Adrenal gland (tissue), 19 donors: ENCODE measurements at regions of chr5 and their contacts with region 1.

Region 1: GRCh38 chr5:36739751-36740221 is 133.4 kb downstream of the SLC1A3 start:
- DNase-seq: peak; percentile 61 to 91 (median 73)
- H3K4me3 ChIP-seq: no peak overlapping the region
- H3K27ac ChIP-seq: no peak overlapping the region
- H3K4me1 ChIP-seq: peaks cover 8 to 12% of the 10 kb centered on the region in 2 donors
- H3K27me3 ChIP-seq: no peaks in the 10 kb centered on the region
- CTCF ChIP-seq: peak; percentile 64 to 84 (median 80)
- POLR2A ChIP-seq: no peak

Region 2: GRCh38 chr5:36414869-36415282 is 324.9 kb before region 1 on chr5:
- intact Hi-C with region 1: no loop called
- DNase-seq: no peak
- H3K4me3 ChIP-seq: no peak overlapping the region
- H3K27ac ChIP-seq: no peak overlapping the region
- H3K4me1 ChIP-seq: no peaks in the 10 kb centered on the region
- H3K27me3 ChIP-seq: no peaks in the 10 kb centered on the region
- CTCF ChIP-seq: peak; percentile 31 to 81 (median 58)
- POLR2A ChIP-seq: no peak

Region 3: GRCh38 chr5:36866174-36866573 is 126.4 kb after region 1 on chr5:
- intact Hi-C with region 1: loop called (anchors 5 to 10 kb)
- DNase-seq: no peak
- H3K4me3 ChIP-seq: no peak overlapping the region
- H3K27ac ChIP-seq: no peak overlapping the region
- H3K4me1 ChIP-seq: no peaks in the 10 kb centered on the region
- H3K27me3 ChIP-seq: no peaks in the 10 kb centered on the region
- CTCF ChIP-seq: no peak
- POLR2A ChIP-seq: no peak

Region 4: GRCh38 chr5:36875790-36876388 is 136.1 kb after region 1 on chr5:
- intact Hi-C with region 1: loop called (anchors 5 to 10 kb)
- DNase-seq: peak; percentile 79 to 90 (median 86)
- H3K4me3 ChIP-seq: peak overlapping the region; percentile 60 to 97 (median 78)
- H3K27ac ChIP-seq: peak overlapping the region; percentile 91 to 99 (median 97)
- H3K4me1 ChIP-seq: peaks cover 19 to 45% of the 10 kb centered on the region in 2 donors
- H3K27me3 ChIP-seq: no peaks in the 10 kb centered on the region
- CTCF ChIP-seq: peak; percentile 21 to 60 (median 40)
- POLR2A ChIP-seq: peak in 1 of 2 donors; percentile 70

Region 5: GRCh38 chr5:37014321-37014720 is 274.5 kb after region 1 on chr5:
- intact Hi-C with region 1: loop called in 1 of 2 experiments (anchors 5 kb)
- DNase-seq: no peak
- H3K4me3 ChIP-seq: no peak overlapping the region
- H3K27ac ChIP-seq: no peak overlapping the region
- H3K4me1 ChIP-seq: no peaks in the 10 kb centered on the region
- H3K27me3 ChIP-seq: no peaks in the 10 kb centered on the region
- CTCF ChIP-seq: no peak
- POLR2A ChIP-seq: no peak